H1 (cell line): ENCODE measurements at regions of chr17 and their contacts with region 1.

Region 1: DNA sequence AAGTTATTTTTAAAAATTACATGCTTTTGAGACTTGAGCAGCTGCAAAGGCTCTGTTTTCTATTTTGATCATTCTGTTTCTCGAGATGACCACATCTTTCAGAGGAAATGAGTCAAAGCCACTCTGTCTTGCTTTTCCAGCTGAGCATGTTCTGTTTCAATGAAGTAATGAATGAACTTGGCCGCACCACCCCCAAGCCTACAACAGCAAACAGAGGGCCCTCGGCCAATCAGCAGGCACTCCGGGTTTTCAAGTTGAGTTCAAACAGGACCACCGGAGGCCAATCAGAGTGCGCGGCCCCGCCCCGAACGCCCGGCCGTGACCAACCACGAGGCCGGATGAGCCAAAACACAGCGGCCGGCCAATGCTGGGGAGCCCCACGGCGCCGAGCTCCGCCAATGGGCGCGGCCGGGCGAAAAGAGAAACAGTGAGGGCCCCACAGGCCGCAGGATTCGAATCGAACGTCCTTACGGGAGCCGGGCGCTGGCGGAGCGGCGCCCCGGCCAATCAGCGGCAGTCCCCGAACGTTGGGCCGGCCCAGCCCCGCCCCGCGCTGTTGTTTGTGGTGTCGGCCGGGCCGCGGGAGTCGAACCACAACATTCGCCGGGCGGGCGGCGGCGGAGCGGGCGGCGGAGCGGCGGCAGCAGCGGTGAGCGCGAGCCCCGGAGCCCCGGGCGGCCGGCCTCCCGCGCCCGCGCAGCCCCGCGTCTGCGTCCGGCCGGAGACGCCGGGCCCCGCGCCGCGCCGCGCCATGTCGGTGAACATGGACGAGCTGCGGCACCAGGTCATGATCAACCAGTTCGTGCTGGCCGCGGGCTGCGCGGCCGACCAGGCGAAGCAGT is at the start of gene UBALD2:
- DNase-seq: peak; percentile 92 to 97
- H3K4me3 ChIP-seq: peak within 1 kb of the TSS; percentile 66 to 82 (median 78)
- H3K27ac ChIP-seq: 0 out of 2 replicates have a peak within 1 kb of the TSS, but pooled peaks have one; percentile 28
- H3K4me1 ChIP-seq: peaks cover 5 to 14% (median 8%) of the 10 kb centered on the region in 4 experiments
- H3K27me3 ChIP-seq: no peaks in the 10 kb centered on the region; a peak in 1 of 7 replicates
- CTCF ChIP-seq: no peak
- EP300 ChIP-seq: no peak
- POLR2A ChIP-seq: no peak
- RAD21 ChIP-seq: no peak
- total RNA-seq, gene UBALD2: 22.6 and 25.6 TPM in 2 replicates

Region 2: GRCh38 chr17:76246080-76247066 is 18.6 kb before region 1 on chr17:
- CTCF ChIA-PET with region 1: interaction called, 49 read pairs
- POLR2A ChIA-PET with region 1: interaction called, 7 read pairs
- DNase-seq: no peak
- H3K4me3 ChIP-seq: no peak overlapping the region
- H3K27ac ChIP-seq: no peak overlapping the region
- H3K4me1 ChIP-seq: peaks cover 0 to 4% (median 1%) of the 10 kb centered on the region in 4 experiments; a peak in 3 of 7 replicates
- H3K27me3 ChIP-seq: peaks cover 0 to 13% (median 12%) of the 10 kb centered on the region in 4 experiments; a peak in 6 of 7 replicates
- CTCF ChIP-seq: no peak
- EP300 ChIP-seq: no peak
- POLR2A ChIP-seq: no peak
- RAD21 ChIP-seq: no peak

Region 3: DNA sequence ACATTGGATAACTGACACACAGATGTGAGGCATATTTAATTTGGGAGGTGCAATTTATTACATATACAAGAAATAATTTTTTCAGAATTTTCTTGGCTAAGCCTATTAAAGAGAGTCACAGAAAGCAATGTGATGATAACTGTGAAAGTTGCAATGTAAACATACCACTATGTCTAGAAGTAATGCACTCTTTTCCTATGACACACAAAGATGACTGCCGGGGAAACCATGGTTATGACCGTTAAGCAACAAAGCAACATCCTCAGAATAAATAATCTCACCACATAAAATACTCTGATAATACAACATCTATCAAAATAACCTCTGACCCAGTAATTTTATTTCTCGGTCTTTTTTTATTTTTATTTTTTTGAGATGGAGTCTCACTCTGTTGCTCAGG is 53.6 kb after region 1 on chr17:
- CTCF ChIA-PET with region 1: no interaction called
- POLR2A ChIA-PET with region 1: no interaction called
- DNase-seq: no peak
- H3K4me3 ChIP-seq: no peak overlapping the region
- H3K27ac ChIP-seq: no peak overlapping the region
- H3K4me1 ChIP-seq: no peaks in the 10 kb centered on the region
- H3K27me3 ChIP-seq: no peaks in the 10 kb centered on the region
- CTCF ChIP-seq: no peak
- EP300 ChIP-seq: no peak
- POLR2A ChIP-seq: no peak
- RAD21 ChIP-seq: no peak